ENCODE measurements at regions of chrX and their contacts with region 1.

Region 1: DNA sequence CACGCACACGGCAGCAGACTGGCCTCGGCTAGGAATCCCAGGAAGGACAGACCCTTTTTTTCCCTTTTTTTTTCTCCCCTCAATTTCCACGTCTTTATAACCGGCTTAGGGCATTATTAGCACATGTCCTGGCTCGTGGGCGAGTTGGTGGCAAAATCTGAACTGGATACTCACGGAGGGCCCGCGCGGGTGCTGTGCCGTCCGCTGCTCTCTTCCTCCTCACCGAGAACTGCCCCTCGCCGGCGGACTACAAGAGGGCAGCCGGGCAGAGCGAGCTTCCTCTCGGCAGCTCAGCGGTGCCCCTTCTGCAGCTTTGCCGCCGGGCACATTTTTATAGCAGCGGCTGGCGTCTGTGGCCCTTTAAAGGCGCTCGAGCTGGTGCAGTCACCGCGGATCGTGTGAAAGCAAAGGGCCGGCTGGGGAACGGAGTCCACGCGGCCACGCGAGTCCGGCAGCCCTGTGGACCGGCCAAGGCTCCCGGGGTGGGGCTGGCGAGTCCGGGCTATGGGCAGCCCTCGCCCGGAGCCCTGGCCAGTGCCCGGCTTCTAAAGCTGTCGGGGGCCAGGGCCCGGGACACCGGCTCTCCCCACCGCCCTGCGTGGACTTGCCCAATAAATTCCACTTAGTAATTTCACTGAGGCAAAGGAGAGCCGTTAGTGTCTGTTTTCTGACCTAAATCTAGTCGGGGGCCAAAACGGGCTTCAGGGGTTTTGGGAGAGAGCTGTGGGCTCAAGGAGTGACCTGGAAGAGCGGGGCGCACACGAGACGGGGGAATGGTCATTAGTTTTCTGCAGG is 1.3 kb upstream of the CITED1 start:
- DNase-seq: no peak

Region 2: GRCh38 chrX:72245461-72246089 is 61.5 kb before region 1 on chrX:
- intact Hi-C with region 1: loop called (anchors 10 kb)
- DNase-seq: no peak

Region 3: GRCh38 chrX:72540318-72540717 is 233.3 kb after region 1 on chrX:
- intact Hi-C with region 1: loop called (anchors 5 kb)
- DNase-seq: no peak

Region 4: DNA sequence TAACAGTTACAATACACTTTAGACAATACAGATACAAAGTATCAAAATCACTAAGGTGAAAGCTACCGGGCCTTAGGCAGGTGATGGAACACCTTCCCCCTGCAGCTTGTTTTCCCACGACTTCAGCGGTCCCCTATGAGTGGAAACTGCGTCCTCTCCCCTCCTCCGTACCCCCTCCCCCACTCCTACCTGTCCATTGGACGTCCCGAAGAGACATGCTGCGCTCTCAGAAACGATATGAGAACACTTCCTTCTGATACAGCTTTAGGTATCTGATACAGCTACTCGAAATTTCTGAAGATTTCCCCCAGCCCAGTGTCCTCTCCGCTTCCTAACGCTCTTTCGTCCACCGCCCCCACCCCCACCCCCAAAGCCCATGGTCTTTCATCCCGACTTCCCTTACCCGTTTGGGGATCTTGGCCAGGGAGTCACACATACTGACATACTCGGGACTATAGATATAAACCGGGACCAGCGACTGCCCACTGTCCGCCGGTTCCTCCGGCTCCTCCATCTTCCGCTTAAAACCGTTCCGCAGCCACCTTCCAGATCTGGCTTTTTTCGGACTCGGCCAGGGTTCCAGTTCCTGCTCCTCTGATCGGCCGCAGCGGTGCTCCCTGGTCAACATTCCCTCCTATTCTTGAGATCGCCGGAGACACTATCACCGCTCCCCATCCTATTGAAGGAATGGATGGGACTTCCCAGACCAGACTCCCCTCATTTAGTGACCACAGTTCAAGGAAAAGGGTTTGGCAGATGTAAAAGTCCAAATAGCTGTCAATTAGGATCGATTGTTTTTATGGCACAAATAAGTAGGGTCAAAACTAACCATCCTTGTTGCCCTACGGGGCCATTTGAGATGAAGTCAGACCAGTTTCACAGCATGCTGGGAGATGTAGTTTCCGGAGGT is 265.5 kb after region 1 on chrX and contains the start of gene HDAC8:
- intact Hi-C with region 1: no loop called
- DNase-seq: no peak
- total RNA-seq, gene HDAC8: 23.4 TPM